Prostate gland (tissue), 2 donors: ENCODE measurements at regions of chr17 and their contacts with region 1.

Region 1: GRCh38 chr17:41505809-41506731 is 658 bp upstream of the KRT13 start:
- DNase-seq: no peak
- H3K4me3 ChIP-seq: no peak overlapping the region
- H3K27ac ChIP-seq: no peak overlapping the region
- H3K4me1 ChIP-seq: peaks cover 2% of the 10 kb centered on the region
- H3K27me3 ChIP-seq: no peaks in the 10 kb centered on the region
- CTCF ChIP-seq: no peak
- POLR2A ChIP-seq: no peak

Region 2: GRCh38 chr17:41464682-41465081 is 41.4 kb before region 1 on chr17:
- intact Hi-C with region 1: loop called (anchors 5 kb)
- DNase-seq: peak; percentile 87
- H3K4me3 ChIP-seq: no peak overlapping the region
- H3K27ac ChIP-seq: no peak overlapping the region
- H3K4me1 ChIP-seq: no peaks in the 10 kb centered on the region
- H3K27me3 ChIP-seq: no peaks in the 10 kb centered on the region
- CTCF ChIP-seq: no peak
- POLR2A ChIP-seq: no peak

Region 3: GRCh38 chr17:41602524-41602923 is 96.5 kb after region 1 on chr17:
- intact Hi-C with region 1: no loop called
- DNase-seq: no peak
- H3K4me3 ChIP-seq: no peak overlapping the region
- H3K27ac ChIP-seq: peak overlapping the region in 1 of 2 donors; percentile 52
- H3K4me1 ChIP-seq: peaks cover 9% of the 10 kb centered on the region
- H3K27me3 ChIP-seq: no peaks in the 10 kb centered on the region
- CTCF ChIP-seq: no peak
- POLR2A ChIP-seq: no peak

Region 4: DNA sequence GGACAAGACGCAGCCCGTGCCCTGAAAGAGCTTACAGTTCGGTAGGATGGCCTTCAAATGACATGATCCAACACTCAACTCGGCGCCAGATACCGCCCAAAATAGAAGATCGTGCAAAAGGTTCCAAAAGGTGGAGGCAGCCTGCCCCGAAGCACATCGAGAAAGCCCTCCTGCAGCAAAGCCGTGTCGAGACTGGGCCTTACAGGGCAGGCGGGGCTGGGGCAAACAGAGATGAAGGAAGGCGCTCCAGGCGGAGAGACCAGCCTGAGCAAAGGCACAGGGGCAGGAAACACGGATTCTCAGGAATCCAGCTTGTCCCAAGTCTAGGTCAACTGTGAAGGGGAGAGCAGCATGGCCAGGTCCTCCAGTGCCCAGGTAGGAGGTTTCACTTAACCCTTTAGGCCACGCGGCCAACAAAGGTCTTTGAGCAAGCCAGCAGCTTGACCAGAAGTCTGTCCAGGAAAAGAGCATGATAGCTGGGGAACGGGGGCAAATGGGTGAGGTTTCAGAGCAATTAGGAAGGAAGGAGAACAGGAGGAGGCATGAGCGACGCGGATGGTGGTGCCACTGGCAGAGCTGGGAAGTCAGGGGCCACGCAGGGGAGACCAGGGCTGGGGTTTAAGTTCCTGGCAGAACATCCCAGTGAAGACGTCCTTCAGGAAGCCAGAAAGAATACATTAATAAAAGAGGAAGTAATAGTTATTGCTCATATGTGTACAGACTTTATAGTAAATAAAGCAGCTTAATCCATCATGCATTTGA is 161.4 kb after region 1 on chr17:
- intact Hi-C with region 1: no loop called
- DNase-seq: no peak
- H3K4me3 ChIP-seq: no peak overlapping the region
- H3K27ac ChIP-seq: no peak overlapping the region
- H3K4me1 ChIP-seq: peaks cover 7% of the 10 kb centered on the region
- H3K27me3 ChIP-seq: no peaks in the 10 kb centered on the region
- CTCF ChIP-seq: no peak
- POLR2A ChIP-seq: no peak

Region 5: GRCh38 chr17:41678907-41679739 is 173.1 kb after region 1 on chr17:
- intact Hi-C with region 1: no loop called
- DNase-seq: no peak
- H3K4me3 ChIP-seq: no peak overlapping the region
- H3K27ac ChIP-seq: peak overlapping the region in 1 of 2 donors; percentile 19
- H3K4me1 ChIP-seq: no peaks in the 10 kb centered on the region
- H3K27me3 ChIP-seq: no peaks in the 10 kb centered on the region
- CTCF ChIP-seq: no peak
- POLR2A ChIP-seq: no peak